Heart right ventricle (tissue), 16 donors: ENCODE measurements at regions of chr18 and their contacts with region 1.

Region 1: GRCh38 chr18:7259475-7260081 is 28.7 kb downstream of the LRRC30 start:
- DNase-seq: peak in 1 of 2 donors; percentile 26
- ATAC-seq: peak in 6 of 8 donors; percentile 21 to 55 (median 31)
- H3K4me3 ChIP-seq: peak overlapping the region in 1 of 10 donors; percentile 10
- H3K27ac ChIP-seq: peak overlapping the region in 4 of 10 donors; percentile 7 to 51 (median 38)
- H3K4me1 ChIP-seq: peaks cover 0 to 39% (median 16%) of the 10 kb centered on the region in 9 donors
- H3K27me3 ChIP-seq: no peaks in the 10 kb centered on the region
- CTCF ChIP-seq: no peak

Region 2: DNA sequence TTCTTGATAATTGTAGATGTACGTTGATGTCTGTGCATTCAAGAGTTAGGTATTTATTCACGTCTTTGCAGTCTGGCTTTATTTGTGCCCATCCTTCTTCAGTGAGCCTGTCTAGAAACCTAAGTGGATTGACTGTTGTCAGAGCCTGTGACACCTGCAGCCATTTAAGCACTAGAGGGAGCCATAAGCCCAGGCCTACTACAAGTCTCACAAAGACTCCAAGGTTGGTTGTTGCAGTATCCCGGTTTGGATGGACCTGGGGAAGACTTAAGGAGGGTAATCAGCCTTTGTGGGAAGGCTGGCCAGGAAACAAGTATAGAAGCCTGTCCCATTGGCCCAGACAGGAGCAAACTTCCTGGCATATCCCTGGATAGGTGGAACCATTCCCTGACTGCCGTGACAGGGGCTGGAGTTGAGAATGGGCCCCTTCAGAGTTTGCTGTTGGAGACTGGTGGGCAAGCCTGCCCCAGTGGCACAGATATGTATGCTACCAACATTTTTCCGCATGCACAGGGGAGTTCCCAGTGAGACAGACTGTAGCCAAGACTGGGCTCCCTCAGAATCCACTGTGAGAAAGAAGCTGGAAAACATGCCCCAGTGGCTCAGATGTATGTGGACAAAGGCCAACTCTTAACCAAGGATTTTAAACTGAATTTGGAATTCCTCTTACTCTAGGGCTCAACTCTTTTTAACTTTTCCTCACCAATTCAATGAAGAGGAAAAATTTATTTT is 38.0 kb before region 1 on chr18:
- intact Hi-C with region 1: loop called in 1 of 10 experiments (anchors 5 kb)
- DNase-seq: peak in 1 of 2 donors; percentile 55
- ATAC-seq: peak; percentile 72 to 96 (median 90)
- H3K4me3 ChIP-seq: no peak overlapping the region
- H3K27ac ChIP-seq: no peak overlapping the region
- H3K4me1 ChIP-seq: no peaks in the 10 kb centered on the region
- H3K27me3 ChIP-seq: no peaks in the 10 kb centered on the region
- CTCF ChIP-seq: peak; percentile 68 to 88 (median 74)

Region 3: DNA sequence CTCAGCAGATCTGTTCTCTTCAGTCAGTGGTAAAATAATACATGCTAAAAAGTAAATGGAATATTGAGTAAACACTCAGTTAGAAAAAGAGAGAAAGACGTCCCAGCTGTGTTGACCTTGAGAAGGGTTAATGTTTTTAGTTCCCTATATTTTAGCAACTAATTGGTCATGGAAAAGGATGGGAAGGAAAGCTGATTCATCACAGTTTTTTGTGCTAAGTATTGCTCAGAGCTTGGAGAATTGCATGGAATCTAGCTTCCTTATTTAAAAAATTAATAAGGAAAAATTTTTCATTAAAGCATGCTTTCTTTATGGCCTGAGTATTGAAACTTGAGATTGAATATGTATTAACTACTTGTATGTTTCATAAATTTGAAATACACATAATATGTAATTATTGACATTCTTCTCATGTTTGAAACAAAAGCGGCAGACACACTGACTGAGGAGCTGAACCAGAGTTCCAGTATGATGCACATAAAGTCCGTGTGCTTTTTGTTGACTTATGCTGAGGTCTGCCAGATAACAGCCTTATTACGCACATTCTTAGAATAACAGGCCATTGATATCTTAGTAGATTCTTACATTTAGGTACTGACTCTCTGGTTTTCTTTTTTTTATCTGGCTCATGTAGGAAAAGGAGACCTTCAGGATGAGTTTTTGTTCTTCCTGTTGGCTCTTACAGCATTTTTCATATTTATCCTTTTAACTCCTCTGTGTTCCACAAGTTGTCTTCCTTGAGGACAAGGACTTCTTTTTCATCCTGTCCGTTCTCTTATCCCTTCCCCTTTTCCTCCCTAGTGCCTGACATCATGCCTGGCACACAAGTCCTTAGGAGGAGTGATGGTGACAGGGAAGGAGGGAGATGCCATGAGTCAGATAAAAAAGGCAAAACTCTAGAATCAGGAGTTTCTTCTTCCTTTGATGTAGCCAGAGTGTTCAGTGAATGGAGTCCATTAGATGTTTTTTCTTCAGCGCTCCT is 501.7 kb after region 1 on chr18:
- intact Hi-C with region 1: loop called in 1 of 10 experiments (anchors 10 kb)
- DNase-seq: no peak
- ATAC-seq: no peak
- H3K4me3 ChIP-seq: no peak overlapping the region
- H3K27ac ChIP-seq: peak overlapping the region in 1 of 10 donors; percentile 7
- H3K4me1 ChIP-seq: peaks cover 3 to 93% (median 66%) of the 10 kb centered on the region in 9 donors
- H3K27me3 ChIP-seq: no peaks in the 10 kb centered on the region
- CTCF ChIP-seq: no peak

Region 4: DNA sequence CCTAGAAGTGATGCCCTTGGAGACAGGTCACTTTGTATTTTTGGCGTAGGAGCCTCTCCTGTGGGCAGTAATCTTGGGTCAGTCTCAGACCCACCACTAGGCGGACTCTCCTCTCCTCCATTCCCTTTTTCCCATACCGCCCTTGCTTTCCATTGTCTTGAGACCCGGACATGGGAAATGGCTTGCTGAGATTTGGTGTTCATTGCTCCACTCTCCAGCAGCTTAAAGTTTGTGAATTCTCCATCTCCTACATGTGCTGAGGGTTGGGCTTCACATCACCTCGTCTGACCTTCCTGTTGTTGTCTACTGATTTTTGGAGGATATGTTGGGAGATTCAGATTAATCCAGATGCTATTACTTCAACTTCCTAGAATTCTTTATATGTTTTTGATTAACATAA is 1190.4 kb after region 1 on chr18:
- intact Hi-C with region 1: loop called in 1 of 10 experiments (anchors 10 kb)
- DNase-seq: peak in 1 of 2 donors; percentile 35
- ATAC-seq: peak; percentile 50 to 91 (median 78)
- H3K4me3 ChIP-seq: no peak overlapping the region
- H3K27ac ChIP-seq: peak overlapping the region in 8 of 10 donors; percentile 23 to 85 (median 64)
- H3K4me1 ChIP-seq: peaks cover 0 to 42% (median 6%) of the 10 kb centered on the region in 9 donors
- H3K27me3 ChIP-seq: no peaks in the 10 kb centered on the region
- CTCF ChIP-seq: peak in 8 of 9 donors; percentile 23 to 59 (median 52)